ENCODE measurements at regions of chr7 and their contacts with region 1.

Region 1: DNA sequence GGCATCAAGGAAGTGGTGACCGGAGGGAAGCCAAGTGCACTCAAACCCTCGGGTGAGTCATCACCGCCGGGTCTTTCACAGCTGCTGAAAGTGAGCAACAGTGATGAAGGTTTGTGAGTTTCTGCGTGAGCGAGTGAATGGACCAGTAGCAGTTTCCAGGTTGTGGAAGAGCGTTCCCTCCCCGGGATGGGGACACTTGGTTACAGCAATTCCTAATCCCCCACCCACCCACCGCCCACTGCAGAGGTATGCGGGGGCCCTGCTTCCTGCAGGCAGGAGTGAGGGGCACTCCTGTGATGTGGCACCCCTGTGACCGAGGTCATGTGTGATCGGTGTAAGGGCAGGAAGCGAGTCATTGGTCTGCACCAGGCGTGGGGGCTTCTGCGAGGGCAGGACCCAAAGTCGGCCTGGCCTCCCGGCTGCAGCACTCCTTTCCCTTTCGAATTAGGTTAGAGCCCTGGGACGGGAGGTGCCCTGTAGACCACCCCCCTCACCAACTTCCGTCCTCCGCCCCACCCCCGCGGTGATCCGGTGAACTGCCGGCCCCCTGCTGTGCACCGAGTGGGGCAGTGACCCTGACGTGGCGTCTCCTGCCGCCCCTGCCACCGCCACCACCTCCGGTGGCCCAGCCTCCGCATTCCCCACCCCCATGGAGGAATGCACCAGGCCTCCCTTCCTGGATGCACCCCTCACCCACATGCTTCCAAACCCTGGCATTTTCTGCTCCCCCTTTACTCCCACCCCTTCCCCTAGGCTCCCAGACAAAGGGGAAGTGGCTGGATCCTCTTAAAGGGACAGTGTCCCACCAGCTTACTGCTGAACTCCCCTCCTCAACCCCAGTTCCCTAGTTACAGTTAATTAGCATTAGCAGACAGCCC is 10.9 kb downstream of the LIMK1 start:
- DNase-seq: peak; percentile 71
- H3K4me3 ChIP-seq: peak overlapping the region; percentile 73
- H3K27ac ChIP-seq: peak overlapping the region; percentile 85
- H3K4me1 ChIP-seq: peaks cover 58% of the 10 kb centered on the region
- CTCF ChIP-seq: no peak

Region 2: DNA sequence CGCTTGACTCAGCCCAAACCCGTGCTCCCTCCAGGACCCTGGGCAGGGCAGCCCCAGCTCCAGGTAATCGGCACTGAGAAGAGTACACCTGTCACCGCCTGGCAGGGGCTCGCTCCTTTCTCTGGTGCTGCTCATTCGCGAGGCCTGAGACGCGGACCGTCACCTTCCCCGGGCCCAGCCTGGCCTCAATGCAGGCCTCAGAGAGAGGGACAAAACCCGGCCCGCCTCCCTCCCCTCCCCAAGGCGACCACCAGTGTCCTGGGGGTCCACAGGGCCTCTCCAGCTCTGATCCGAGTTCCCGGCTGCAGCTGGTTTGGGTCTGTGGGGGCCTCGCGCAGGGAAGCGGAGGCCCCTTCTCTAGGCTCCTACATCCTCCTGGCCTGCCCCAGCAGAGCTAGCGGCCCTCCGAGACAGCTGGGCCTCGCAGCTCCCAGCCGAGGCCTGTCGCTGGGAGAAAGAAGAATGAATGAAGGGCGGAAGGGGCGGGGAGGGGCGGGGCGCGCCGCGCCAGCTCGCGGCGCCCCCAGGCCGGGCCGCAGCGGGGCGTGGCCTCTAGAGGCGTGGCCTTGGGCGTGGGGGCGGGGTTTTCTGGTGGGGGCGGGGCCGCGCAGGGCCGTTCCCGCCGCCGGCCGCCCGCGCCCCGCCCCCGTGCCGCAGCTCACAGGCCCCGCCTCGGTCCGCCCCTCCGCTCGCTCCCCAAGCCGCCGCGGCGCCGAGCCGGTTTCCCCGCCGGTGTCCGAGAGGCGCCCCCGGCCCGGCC is 11.2 kb before region 1 on chr7 and contains the start of gene LIMK1:
- CTCF ChIA-PET with region 1: interaction called, 4 read pairs
- POLR2A ChIA-PET with region 1: interaction called, 12 read pairs
- intact Hi-C with region 1: loop called (anchors 1 kb)
- DNase-seq: peak; percentile 88
- H3K4me3 ChIP-seq: peak within 1 kb of the TSS; percentile 83
- H3K27ac ChIP-seq: peak within 1 kb of the TSS; percentile 31
- H3K4me1 ChIP-seq: peaks cover 30% of the 10 kb centered on the region
- CTCF ChIP-seq: no peak
- total RNA-seq, gene LIMK1: 21.9 and 31.7 TPM in 2 replicates

Region 3: GRCh38 chr7:74173866-74174605 is 79.6 kb after region 1 on chr7 and contains the start of gene EIF4H:
- CTCF ChIA-PET with region 1: no interaction called
- POLR2A ChIA-PET with region 1: interaction called, 9 read pairs
- intact Hi-C with region 1: loop called (anchors 2 kb)
- DNase-seq: peak; percentile 96
- H3K4me3 ChIP-seq: peak within 1 kb of the TSS; percentile 94
- H3K27ac ChIP-seq: peak within 1 kb of the TSS; percentile 59
- H3K4me1 ChIP-seq: peaks cover 47% of the 10 kb centered on the region
- CTCF ChIP-seq: no peak
- total RNA-seq, gene EIF4H: 202 and 231 TPM in 2 replicates

Region 4: DNA sequence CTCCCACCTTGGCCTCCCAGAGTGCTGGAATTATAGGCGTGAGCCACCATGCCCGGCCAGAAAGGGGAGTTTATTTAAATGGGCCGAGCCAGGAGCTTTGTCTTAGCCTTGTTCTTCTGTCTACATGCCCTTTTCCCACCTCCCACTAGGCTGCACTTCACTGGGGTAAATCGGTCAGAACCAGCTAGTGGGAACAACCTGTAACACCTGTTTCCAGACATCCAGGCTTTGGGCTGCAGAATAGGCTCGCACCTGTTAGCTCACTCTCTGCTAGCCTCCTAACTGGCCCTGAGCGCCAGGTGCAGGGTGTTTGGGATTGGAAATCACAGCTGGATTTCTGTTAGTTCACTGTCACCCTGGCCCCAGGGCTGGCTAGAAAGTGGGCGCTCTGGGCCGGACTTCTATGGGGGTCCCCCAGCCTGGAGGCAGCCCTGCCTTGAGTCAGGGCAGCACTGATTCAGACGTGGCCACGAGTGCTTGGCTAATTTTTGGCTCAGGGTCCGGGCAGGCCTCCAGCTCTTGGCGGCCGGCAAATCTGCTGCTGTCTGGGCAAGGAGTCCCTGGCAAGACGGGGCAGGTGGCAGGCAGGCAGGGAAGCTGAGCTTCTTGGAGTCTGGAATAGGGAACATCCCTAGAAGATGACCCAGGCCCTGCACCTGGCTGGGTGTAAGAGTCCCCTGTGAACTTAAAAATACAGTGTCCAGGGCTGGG is 407.9 kb after region 1 on chr7:
- CTCF ChIA-PET with region 1: no interaction called
- POLR2A ChIA-PET with region 1: no interaction called
- intact Hi-C with region 1: no loop called
- DNase-seq: no peak
- H3K4me3 ChIP-seq: no peak overlapping the region
- H3K27ac ChIP-seq: no peak overlapping the region
- H3K4me1 ChIP-seq: peaks cover 13% of the 10 kb centered on the region
- CTCF ChIP-seq: no peak